ENCODE measurements at regions of chr3 and their contacts with region 1.

Region 1: GRCh38 chr3:195863121-195864006 is 45.0 kb downstream of the TNK2 start:
- DNase-seq: peak; percentile 70
- ATAC-seq: peak; percentile 72
- H3K4me3 Mint-ChIP-seq: no peak overlapping the region
- H3K27ac Mint-ChIP-seq: no peak overlapping the region
- H3K4me1 Mint-ChIP-seq: peaks cover 4% of the 10 kb centered on the region
- H3K27me3 Mint-ChIP-seq: no peaks in the 10 kb centered on the region

Region 2: GRCh38 chr3:194556086-194557056 is 1307.0 kb before region 1 on chr3:
- CTCF ChIA-PET with region 1: no interaction called
- POLR2A ChIA-PET with region 1: no interaction called
- DNase-seq: no peak
- ATAC-seq: peak; percentile 55
- H3K4me3 Mint-ChIP-seq: peak overlapping the region; percentile 65
- H3K27ac Mint-ChIP-seq: peak overlapping the region; percentile 66
- H3K4me1 Mint-ChIP-seq: peaks cover 7% of the 10 kb centered on the region
- H3K27me3 Mint-ChIP-seq: peaks cover 5% of the 10 kb centered on the region

Region 3: DNA sequence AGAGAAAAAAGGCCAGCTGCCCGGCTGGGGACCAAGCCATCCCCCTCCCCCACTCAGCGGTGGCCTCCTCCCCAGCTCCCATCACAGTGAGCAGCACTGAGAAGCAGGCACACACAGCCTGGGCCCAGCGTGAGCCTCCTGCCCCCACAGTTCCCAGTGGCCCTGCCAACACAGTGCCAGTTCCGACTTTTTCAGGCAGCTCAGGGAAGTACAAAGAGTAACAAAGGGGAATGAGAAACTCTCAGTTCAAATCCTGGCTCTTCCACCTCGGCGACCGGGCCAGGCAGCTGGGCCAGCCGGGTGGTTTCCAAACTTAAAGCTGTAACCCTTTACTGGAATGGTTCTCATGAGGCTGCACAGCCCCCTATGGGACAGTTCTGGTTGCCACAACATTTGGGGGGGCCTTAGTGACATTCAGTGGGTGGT is 26.5 kb after region 1 on chr3:
- CTCF ChIA-PET with region 1: interaction called, 54 read pairs
- POLR2A ChIA-PET with region 1: no interaction called
- DNase-seq: no peak
- ATAC-seq: no peak
- H3K4me3 Mint-ChIP-seq: no peak overlapping the region
- H3K27ac Mint-ChIP-seq: no peak overlapping the region
- H3K4me1 Mint-ChIP-seq: peaks cover 21% of the 10 kb centered on the region
- H3K27me3 Mint-ChIP-seq: no peaks in the 10 kb centered on the region

Region 4: DNA sequence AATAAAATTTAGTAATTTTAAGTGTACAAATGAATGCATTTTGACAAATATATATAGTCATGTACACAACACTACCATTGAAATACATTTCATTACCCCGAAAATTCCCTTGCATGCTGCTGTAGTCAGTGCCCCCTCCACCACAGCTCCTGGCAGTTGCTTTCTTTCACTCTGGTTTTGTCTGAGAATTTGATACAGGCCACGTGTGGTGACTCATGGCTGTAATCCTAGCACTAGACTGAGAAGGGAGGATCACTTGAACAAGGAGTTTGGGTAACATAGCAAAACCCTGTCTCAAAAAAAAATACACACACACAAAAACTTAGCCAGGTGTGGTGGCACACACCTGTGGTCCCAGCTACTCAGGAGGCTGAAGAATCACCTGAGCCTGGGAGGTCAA is 153.1 kb after region 1 on chr3:
- CTCF ChIA-PET with region 1: no interaction called
- POLR2A ChIA-PET with region 1: no interaction called
- DNase-seq: no peak
- ATAC-seq: no peak
- H3K4me3 Mint-ChIP-seq: no peak overlapping the region
- H3K27ac Mint-ChIP-seq: no peak overlapping the region
- H3K4me1 Mint-ChIP-seq: no peaks in the 10 kb centered on the region
- H3K27me3 Mint-ChIP-seq: peaks cover 18% of the 10 kb centered on the region

Region 5: GRCh38 chr3:196115678-196116083 is 252.3 kb after region 1 on chr3:
- CTCF ChIA-PET with region 1: no interaction called
- POLR2A ChIA-PET with region 1: no interaction called
- DNase-seq: peak; percentile 38
- ATAC-seq: no peak
- H3K4me3 Mint-ChIP-seq: no peak overlapping the region
- H3K27ac Mint-ChIP-seq: no peak overlapping the region
- H3K4me1 Mint-ChIP-seq: peaks cover 32% of the 10 kb centered on the region
- H3K27me3 Mint-ChIP-seq: no peaks in the 10 kb centered on the region

Region 6: DNA sequence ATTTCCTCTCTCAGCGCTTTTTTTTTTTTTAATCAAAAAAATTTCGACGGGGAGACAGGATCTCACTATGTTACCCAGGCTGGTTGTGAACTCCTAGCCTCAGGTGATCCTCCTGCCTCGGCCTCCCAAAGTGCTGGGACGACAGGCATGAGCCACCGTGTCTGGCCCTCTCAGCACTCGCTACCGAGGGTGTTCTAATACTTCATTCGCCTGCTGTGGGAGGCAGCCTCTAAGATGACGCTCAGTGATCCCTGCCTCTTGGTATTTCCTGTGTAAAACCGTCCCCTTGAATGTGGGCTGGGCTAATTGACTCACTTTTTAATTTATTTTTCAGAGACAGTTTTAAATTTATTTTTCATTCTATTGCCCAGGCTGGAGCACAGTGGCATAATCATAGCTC is 281.3 kb after region 1 on chr3:
- CTCF ChIA-PET with region 1: no interaction called
- POLR2A ChIA-PET with region 1: no interaction called
- DNase-seq: no peak
- ATAC-seq: no peak
- H3K4me3 Mint-ChIP-seq: no peak overlapping the region
- H3K27ac Mint-ChIP-seq: no peak overlapping the region
- H3K4me1 Mint-ChIP-seq: peaks cover 5% of the 10 kb centered on the region
- H3K27me3 Mint-ChIP-seq: peaks cover 4% of the 10 kb centered on the region